ENCODE measurements at regions of chr3 and their contacts with region 1.

Region 1: DNA sequence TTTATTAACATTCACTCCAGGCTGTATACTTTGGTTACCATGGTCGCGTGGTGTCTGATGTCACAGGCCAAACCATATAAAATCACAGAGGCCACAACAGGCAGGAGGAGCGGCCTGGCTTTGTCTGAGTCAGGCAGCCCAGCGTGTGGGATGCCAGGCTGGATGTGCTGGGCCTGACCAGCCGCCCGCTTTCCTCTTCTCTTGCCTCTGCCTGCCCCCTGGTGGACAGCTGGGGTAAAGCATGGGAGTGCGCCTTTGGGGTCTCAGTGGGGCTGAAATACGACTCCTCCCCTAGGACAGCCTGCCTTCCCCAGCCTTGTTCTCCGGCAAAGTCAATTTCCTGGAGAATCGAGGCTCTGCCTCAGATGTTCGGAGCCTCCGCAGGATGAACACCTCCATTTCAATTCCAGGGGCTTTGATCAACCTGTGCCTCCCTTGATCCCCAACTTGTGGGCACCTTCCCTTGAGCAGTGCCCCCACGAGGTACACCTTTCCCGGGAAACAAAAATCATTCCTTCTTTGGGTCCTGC is 78.2 kb downstream of the CCNL1 start:
- DNase-seq: peak; percentile 92
- ATAC-seq: peak; percentile 96 to 97
- H3K4me3 ChIP-seq: no peak overlapping the region
- H3K27ac ChIP-seq: no peak overlapping the region
- H3K4me1 ChIP-seq: peaks cover 8% of the 10 kb centered on the region
- H3K27me3 ChIP-seq: no peaks in the 10 kb centered on the region
- CTCF ChIP-seq: peak; percentile 98

Region 2: DNA sequence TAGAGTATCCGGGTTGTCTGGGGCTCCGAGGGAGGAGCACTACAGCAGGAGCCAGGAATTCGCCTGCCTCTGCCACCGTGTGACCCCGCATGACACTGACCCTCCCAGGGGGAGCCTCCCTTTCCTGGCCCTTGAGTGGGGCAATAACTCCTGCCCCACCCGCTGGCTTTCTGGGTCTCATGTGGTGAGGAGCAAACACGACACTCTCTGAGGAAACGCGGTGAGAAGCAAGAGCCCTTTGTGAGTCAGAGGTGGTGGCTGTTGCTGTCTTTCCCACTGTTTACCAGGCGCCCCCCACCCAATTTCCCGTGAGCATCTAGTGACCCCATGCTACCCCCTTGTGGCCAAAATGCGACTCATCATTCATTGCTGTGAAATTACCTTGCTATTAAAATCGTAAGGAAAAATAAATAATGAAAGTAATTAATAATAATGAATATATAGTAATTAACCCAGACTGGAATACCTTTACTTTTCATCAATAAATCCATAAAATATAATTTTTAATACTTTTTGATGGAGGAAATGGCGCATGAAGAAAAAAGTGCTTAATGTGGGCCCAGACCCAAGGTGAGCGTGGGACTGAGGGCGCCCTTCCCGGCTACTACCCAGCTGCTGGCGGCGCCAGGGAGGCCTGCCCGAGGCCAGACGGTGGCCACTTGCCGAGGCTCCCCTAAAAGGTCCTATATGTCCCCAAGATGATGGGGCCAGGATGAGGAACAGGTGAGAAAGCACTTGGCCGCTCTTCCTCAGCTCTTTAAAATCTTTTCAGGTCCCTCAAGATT is 48.9 kb after region 1 on chr3:
- intact Hi-C with region 1: loop called (anchors 10 kb)
- DNase-seq: peak; percentile 79
- ATAC-seq: peak; percentile 52 to 63
- H3K4me3 ChIP-seq: no peak overlapping the region
- H3K27ac ChIP-seq: peak overlapping the region; percentile 82
- H3K4me1 ChIP-seq: peaks cover 58% of the 10 kb centered on the region
- H3K27me3 ChIP-seq: no peaks in the 10 kb centered on the region
- CTCF ChIP-seq: peak; percentile 57

Measured in lower lobe of right lung (tissue), 2 donors.